Left colon (tissue), 2 donors: ENCODE measurements at regions of chr4 and their contacts with region 1.

Region 1: DNA sequence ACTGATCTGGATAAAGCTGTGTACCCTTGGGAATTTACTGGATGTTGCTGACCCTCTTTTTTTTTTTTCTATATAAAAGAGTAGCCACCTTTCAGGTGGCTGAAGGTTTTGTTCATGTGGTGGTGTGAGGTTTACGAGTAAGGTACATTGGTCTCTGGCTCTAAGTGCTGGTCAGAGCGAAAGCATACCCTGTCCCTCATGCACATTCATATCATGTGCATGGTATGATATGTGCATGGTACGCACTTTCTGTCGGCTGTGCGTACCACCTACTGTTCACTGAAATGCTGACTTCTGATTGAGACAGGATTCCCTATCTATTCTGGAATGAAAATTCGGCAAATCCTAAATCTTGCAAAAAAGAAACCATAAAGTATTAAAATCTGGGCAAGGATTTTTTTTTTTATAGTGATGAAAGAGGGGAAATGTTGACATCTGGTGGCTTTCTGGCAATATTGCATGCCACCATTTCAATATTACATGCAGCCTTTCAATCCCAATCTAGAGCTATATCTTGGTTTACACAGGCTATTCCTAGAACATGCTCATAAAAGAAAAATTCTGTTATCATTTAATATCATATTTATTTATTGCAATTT is 32.8 kb downstream of the FAM149A start:
- DNase-seq: no peak
- ATAC-seq: peak; percentile 59

Region 2: GRCh38 chr4:185384930-185385331 is 752.4 kb before region 1 on chr4:
- intact Hi-C with region 1: no loop called
- DNase-seq: no peak
- ATAC-seq: peak; percentile 71

Region 3: GRCh38 chr4:185774845-185775680 is 362.2 kb before region 1 on chr4:
- intact Hi-C with region 1: no loop called
- DNase-seq: peak in 1 of 2 donors; percentile 10
- ATAC-seq: peak; percentile 56

Region 4: DNA sequence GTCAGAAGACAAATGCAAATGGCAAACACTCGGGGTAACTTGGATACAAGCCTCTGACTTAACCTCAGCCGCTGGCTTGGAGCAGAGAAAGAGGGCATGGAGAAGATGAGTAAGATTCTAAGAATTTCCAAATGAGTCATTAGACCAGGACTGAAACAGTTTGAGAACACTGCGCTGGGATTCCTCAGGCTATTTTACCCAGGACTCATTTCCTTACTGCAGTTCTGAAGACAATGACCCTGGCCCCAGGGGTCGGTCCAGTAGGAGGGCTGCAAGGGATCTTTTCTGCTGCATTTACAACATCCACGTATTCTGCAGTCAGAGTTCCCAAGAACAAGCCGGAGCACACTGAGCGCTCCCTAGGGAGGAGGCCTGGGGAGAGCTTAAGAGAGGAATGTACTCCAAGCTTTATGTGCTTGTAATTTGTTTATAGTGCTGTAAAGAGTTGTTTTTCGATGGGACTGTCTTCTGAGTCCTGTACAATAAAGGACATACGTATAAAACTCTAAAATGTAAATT is 298.0 kb before region 1 on chr4:
- intact Hi-C with region 1: no loop called
- DNase-seq: peak; percentile 30 to 57
- ATAC-seq: peak; percentile 93

Region 5: DNA sequence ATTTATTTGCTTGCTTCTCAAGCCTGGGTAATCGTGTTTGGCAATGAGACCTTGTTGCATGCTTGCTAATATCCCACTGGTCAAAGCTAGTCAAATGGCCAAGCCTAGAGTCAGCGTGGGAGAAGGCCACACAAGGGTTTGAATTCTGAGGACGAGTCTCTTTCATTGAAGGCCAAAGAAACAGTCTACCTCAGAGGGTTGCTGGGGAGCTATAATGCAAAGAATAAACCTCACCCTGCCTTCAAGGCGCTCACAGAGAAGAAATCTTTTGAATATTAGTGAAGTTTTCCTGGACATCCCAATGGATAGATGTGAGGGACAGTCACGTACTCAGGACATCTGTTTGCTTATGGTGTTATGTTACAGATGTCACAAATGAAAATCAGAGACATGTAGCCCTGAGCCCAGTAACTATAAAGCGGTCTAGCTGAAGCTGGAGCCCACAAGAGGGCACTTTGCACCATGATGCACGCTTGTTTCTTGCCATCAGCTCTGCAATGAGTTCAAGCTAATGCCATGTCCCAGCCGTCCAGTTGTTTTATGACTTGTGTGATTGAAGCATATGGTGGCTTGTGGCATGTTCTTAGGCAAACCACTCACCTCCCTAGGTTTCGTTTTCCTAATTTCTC is 69.4 kb before region 1 on chr4:
- intact Hi-C with region 1: loop called in 1 of 2 experiments (anchors 5 kb)
- DNase-seq: peak; percentile 75 to 82
- ATAC-seq: peak; percentile 91

Region 6: GRCh38 chr4:186228514-186228894 is 91.2 kb after region 1 on chr4:
- intact Hi-C with region 1: no loop called
- DNase-seq: no peak
- ATAC-seq: peak; percentile 34